Right ventricle myocardium inferior (tissue), 1 donor: ENCODE measurements at regions of chr7 and their contacts with region 1.

Region 1: DNA sequence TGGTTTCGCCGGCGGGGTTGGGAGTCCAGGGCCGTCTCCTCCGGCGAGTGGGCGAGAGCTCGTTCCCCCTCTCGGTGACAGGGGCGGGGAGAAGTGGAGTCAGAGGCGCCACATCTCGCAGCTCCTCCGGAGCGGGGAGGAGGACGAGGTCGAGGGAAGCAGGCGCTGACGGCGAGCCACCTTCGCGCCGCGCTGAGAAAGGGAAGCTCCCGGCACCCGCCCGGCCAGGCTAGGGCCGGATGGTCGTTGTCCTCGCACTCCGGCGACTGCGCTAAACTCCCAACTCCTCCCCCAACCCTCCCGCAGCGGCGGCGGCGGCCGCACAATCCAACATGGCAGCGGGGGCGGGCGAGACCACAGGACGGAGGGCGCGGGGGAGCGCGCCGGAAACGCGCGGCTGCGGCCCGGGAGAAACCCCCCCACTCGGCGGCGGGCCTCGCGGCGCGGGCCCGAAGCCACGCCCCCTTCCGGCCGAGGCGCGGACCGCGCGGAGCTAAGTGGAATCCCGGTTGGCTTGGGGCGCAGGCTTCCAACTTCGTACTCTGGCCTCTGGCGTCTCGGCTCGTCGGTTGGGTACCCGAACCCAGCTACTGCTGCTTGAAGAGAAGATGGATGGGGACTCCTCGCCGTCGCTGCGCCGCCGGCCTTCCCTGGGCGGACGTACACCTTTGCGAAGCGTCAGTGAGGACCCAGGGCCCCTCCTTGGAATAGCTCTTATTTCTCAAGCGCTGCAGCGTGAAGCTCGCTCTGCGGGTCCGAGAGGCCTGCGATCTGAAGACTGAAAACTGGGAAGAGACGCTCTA is at the start of gene WASL:
- DNase-seq: peak; percentile 95
- ATAC-seq: peak; percentile 97
- total RNA-seq, gene WASL: 28.4 TPM

Region 2: DNA sequence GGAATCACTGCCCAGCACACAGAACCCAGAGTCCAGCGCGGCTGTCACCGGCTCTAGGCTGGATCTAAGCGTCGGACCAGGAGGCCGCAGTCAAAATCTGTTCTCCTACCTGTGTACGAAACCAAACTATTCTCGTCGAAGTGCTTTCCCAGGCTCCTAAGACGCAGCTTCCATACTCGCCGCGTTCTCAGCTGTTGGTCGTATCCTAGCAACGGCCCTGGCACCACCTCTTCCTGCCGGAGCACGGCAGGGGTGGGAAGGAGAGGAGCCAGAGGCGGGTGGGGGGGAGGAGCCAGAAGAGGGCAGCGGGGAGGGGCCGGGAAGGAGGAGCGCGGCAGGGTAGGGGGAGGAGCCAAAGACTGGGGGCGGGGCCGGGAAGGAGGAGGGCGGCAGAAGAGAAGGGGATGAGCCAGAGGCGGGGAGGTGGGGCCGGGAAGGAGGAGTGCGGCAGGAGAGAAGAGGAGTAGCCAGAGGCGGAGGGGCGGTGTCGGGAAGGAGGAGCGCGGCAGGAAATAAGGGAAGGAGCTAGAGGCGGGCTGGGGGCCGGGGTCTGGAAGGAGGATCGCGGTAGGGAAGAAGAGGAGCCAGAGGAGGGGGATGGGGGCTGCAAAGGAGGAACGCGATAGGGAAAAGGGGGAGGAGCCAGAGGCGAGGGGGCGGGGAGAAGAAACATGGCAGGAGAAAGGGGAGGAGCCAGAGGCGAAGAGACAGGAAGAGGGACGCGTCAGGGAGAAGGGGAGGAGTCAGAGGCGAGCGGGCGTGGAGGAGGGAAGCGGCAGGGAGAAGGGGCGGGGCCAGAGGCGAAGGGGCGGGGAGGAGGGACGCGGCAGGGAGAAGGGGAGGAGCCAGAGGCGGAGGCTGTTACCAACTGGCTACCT is 214.3 kb before region 1 on chr7 and contains the start of gene IQUB:
- intact Hi-C with region 1: loop called (anchors 2 kb)
- DNase-seq: peak; percentile 98
- ATAC-seq: peak; percentile 97
- total RNA-seq, gene IQUB: 0.54 TPM

Region 3: DNA sequence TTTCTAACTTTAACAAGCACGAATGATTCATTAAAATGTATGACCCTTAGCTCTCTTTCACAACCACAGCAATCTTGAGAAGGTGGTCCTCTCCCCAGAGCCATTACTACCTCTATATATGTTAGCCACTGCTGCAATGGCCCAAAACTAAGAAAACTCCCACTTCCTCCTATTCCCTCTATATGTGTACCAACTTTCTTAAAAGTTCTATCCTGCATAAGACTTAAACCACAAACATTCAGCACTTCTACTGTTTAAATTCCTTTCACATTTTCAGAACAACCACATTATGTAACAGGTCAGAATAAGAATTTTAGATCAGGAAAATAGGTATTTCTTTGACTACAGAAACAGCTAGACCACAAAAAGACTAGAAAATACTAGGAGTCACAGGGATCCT is 36.3 kb before region 1 on chr7:
- intact Hi-C with region 1: loop called (anchors 5 kb)
- DNase-seq: no peak
- ATAC-seq: no peak

Region 4: GRCh38 chr7:123770378-123770777 is 21.4 kb after region 1 on chr7:
- intact Hi-C with region 1: loop called (anchors 2 kb)
- DNase-seq: no peak
- ATAC-seq: no peak